Colonic mucosa (tissue), 4 donors: ENCODE measurements at regions of chr4 and their contacts with region 1.

Region 1: DNA sequence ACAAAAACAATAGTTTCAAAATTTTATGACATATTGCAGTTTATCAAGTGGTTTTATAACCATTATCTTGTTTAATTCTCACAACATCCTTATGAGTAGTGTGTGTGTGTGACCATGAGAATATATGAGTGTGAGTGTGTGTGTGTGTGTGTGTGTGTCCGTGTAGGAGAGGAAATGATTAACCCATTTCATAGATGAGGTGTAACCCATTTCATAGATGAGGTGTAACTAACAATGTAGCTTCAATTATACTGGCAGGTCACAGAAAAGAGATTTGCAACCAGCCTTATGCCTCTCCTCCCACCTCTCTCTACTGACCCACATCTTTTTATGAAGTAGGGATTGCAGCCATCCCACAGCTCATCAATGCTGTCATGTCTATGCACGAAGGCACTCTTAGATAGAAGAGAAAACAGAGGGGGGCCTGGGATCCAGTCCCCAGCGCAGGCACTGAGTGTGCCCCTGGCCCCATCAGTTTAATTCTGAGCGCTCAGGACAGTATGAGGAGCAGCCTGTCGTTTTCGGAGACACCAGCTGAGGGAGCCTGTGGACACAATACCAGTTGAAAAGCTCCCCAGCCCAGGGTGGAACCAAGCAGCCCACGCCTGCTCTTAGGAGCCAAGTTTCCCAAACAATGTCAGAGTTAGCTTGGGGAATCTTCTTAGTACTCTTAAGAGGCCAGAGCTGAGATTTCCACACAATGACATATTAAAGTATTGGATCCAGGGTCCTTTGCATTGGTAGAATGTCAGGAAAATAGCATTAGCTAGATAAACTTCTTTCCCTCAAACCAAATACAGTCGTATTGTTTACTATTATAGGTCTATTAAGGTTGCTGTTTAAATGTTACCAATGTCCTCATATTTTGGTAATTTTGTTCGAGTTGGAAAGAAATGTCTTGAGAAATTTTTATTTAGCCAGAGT is 88.6 kb downstream of the PALLD start:
- DNase-seq: peak; percentile 82
- H3K4me3 ChIP-seq: no peak overlapping the region
- H3K27ac ChIP-seq: no peak overlapping the region
- H3K4me1 ChIP-seq: no peaks in the 10 kb centered on the region
- H3K27me3 ChIP-seq: no peaks in the 10 kb centered on the region
- CTCF ChIP-seq: peak; percentile 60

Region 2: GRCh38 chr4:168070903-168071302 is 514.5 kb before region 1 on chr4:
- intact Hi-C with region 1: no loop called
- DNase-seq: no peak
- H3K4me3 ChIP-seq: no peak overlapping the region
- H3K27ac ChIP-seq: no peak overlapping the region
- H3K4me1 ChIP-seq: no peaks in the 10 kb centered on the region
- H3K27me3 ChIP-seq: no peaks in the 10 kb centered on the region
- CTCF ChIP-seq: no peak

Region 3: GRCh38 chr4:168679397-168680192 is 94.2 kb after region 1 on chr4:
- intact Hi-C with region 1: loop called (anchors 10 kb)
- DNase-seq: no peak
- H3K4me3 ChIP-seq: no peak overlapping the region
- H3K27ac ChIP-seq: no peak overlapping the region
- H3K4me1 ChIP-seq: no peaks in the 10 kb centered on the region
- H3K27me3 ChIP-seq: no peaks in the 10 kb centered on the region
- CTCF ChIP-seq: no peak

Region 4: DNA sequence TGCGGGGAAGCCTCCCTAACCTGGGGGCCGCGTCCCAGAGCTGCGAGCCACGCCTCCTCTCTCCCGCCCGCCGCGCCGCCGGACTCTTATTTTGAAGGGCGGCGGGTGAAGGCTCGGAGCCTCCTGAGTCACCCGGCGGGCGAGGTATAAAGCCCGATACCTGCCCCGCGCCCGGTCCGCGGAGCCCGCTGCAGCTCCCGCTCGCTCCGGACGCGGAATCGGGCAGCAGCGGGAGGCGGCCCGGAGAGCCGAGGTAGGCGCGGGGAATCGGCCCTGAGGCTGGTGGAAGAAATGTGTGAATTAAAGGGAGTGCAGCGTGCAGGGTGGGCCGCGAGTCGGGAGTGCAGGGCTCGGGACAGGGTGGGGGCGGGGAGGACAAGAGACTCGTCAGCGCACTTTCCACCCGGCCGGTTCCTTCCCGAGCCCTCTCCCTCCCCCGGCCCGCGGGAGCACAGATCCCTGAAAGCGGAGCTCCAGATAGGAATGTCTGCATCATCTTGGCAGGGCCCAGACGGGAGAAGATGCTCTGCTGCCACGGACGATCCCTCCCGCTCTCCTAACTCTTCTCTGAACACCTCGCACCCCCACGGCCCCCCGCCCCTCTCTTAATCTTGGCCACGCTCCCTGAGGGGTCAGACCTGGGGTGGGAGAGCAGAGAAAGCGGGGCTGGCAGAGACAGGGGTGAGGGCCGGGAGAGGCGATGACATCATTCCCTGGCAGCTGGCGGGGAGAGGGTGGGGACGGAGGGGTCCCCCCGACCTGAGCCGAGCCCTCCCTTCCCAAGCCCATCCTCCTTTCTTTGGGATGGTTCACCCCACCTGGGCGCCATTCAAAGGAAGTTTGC is 246.7 kb after region 1 on chr4:
- intact Hi-C with region 1: loop called (anchors 10 kb)
- DNase-seq: peak; percentile 84
- H3K4me3 ChIP-seq: peak overlapping the region; percentile 78
- H3K27ac ChIP-seq: peak overlapping the region; percentile 71
- H3K4me1 ChIP-seq: no peaks in the 10 kb centered on the region
- H3K27me3 ChIP-seq: no peaks in the 10 kb centered on the region
- CTCF ChIP-seq: no peak

Region 5: GRCh38 chr4:168917138-168917779 is 331.8 kb after region 1 on chr4:
- intact Hi-C with region 1: loop called (anchors 5 kb)
- DNase-seq: no peak
- H3K4me3 ChIP-seq: no peak overlapping the region
- H3K27ac ChIP-seq: no peak overlapping the region
- H3K4me1 ChIP-seq: no peaks in the 10 kb centered on the region
- H3K27me3 ChIP-seq: no peaks in the 10 kb centered on the region
- CTCF ChIP-seq: peak; percentile 38